ENCODE measurements at regions of chr10 and their contacts with region 1.

Region 1: DNA sequence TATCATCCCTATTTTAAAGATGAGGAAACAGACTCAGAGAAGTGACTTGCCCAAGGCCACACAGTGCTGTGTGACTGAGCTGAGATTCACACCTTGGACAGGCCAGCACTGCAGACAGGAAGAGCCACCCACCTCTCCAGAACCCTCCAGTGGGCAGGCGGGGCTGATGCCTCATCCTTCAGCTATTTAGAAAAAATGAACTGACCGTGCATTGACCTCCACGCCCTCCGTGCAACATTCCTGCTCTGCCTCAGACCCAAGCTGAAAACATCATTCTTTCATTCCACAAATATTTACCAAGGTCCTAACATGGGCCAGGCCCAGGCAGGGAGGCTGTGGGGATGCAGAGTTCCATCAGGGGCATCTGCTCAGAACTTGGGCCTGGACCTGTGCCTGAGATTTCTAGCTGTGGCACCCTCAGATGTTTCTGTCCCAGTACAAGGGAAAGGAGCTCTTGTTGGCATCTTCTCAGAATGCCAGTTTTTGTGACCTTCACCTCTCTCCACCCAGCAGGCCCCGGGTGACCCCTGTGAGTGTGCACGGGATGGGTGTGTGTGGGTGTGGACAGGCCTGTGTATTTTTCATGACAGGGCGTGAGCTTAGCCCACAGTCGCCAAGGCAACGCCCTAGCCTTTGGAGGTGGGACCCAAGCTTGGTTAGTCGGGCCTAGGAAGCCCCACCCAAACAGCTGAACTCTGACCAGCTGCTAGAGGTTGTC is 6.5 kb downstream of the VSIR start:
- DNase-seq: peak; percentile 50
- ATAC-seq: no peak
- H3K4me3 Mint-ChIP-seq: peak overlapping the region; percentile 3
- H3K27ac Mint-ChIP-seq: peak overlapping the region; percentile 82
- H3K4me1 Mint-ChIP-seq: peaks cover 92% of the 10 kb centered on the region
- H3K27me3 Mint-ChIP-seq: no peaks in the 10 kb centered on the region

Region 2: DNA sequence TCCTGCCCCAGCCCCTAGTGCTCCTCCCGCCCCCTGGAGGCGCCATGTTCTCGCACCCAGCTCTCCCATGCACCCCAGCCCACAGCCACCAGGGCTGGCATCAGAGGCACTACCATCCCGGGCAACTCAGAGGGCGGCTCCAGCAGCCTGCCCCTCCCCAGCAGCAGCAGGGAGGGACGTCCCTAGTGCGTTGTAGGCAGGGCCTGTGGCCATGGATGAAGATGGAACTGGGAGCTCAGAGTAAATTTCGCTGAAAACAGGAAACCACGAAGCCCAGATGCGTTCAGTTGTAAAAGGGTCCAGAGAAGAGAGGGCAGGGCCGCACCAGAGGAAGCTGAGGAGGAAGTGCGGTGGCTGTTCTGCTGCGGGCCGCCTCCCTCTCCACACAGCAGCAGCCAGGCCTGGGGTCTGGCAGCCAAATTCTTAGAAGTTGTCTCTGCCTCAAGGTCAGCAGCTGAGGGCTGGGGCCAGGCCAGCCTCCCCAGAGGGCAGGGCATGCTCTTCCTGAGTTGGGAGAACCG is 18.1 kb before region 1 on chr10:
- CTCF ChIA-PET with region 1: interaction called, 45 read pairs
- POLR2A ChIA-PET with region 1: interaction called, 60 read pairs
- DNase-seq: peak; percentile 94
- ATAC-seq: peak; percentile 83
- H3K4me3 Mint-ChIP-seq: peak overlapping the region; percentile 61
- H3K27ac Mint-ChIP-seq: peak overlapping the region; percentile 93
- H3K4me1 Mint-ChIP-seq: peaks cover 98% of the 10 kb centered on the region
- H3K27me3 Mint-ChIP-seq: no peaks in the 10 kb centered on the region

Region 3: GRCh38 chr10:71799067-71799466 is 32.2 kb after region 1 on chr10:
- CTCF ChIA-PET with region 1: no interaction called
- POLR2A ChIA-PET with region 1: no interaction called
- DNase-seq: no peak
- ATAC-seq: no peak
- H3K4me3 Mint-ChIP-seq: no peak overlapping the region
- H3K27ac Mint-ChIP-seq: no peak overlapping the region
- H3K4me1 Mint-ChIP-seq: peaks cover 26% of the 10 kb centered on the region
- H3K27me3 Mint-ChIP-seq: no peaks in the 10 kb centered on the region

Region 4: DNA sequence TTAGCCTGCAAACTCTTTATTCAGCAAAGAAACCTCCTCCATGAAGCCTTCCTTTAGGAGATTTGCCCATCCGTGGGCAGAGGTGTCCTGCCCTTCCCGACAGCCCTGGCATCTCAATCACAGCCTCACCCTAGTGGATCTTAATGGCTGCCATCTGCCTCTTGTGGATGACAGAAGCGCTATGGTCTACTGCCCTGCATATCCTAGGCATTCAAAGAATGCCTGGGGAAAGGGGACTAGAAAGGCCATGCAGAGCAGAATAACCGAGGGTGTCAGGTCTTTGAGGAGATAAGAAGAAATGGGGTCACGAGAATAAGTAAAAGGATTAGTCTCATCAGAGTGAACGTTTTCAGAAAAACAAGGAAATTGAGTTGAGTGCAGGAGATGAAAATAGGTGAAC is 379.2 kb after region 1 on chr10:
- CTCF ChIA-PET with region 1: no interaction called
- POLR2A ChIA-PET with region 1: no interaction called
- DNase-seq: no peak
- ATAC-seq: no peak
- H3K4me3 Mint-ChIP-seq: no peak overlapping the region
- H3K27ac Mint-ChIP-seq: no peak overlapping the region
- H3K4me1 Mint-ChIP-seq: no peaks in the 10 kb centered on the region
- H3K27me3 Mint-ChIP-seq: no peaks in the 10 kb centered on the region

Measured in activated CD8-positive, alpha-beta T cell treated with anti-CD3 and anti-CD28 coated beads, Interleukin-2, amount 10 ng/mL, durations not matched to agents 7 days and 5 days (primary cell).